Mucosa of descending colon (tissue), 3 donors: ENCODE measurements at regions of chr3 and their contacts with region 1.

Region 1: GRCh38 chr3:5122030-5122740 is at the start of gene ARL8B:
- DNase-seq: peak; percentile 93 to 95 (median 93)
- ATAC-seq: peak; percentile 100
- H3K4me3 ChIP-seq: peak within 1 kb of the TSS; percentile 100
- H3K4me1 ChIP-seq: peaks cover 14% of the 10 kb centered on the region
- CTCF ChIP-seq: peak; percentile 98
- total RNA-seq, gene ARL8B: 49.3 to 68.5 (median 57.6) TPM

Region 2: GRCh38 chr3:5151586-5151985 is 29.4 kb after region 1 on chr3:
- intact Hi-C with region 1: no loop called
- DNase-seq: no peak
- ATAC-seq: no peak
- H3K4me3 ChIP-seq: no peak overlapping the region
- H3K4me1 ChIP-seq: no peaks in the 10 kb centered on the region
- CTCF ChIP-seq: no peak

Region 3: GRCh38 chr3:5187156-5187919 is 65.2 kb after region 1 on chr3 and contains the start of gene EDEM1:
- intact Hi-C with region 1: loop called in 1 of 2 experiments (anchors 10 kb)
- DNase-seq: peak; percentile 95 to 100 (median 97)
- ATAC-seq: peak; percentile 93
- H3K4me3 ChIP-seq: peak within 1 kb of the TSS; percentile 99
- H3K4me1 ChIP-seq: peaks cover 32% of the 10 kb centered on the region
- CTCF ChIP-seq: peak; percentile 14
- total RNA-seq, gene EDEM1: 30.3 to 52.6 (median 45.4) TPM